ENCODE measurements at regions of chr12 and their contacts with region 1.

Region 1: GRCh38 chr12:20369305-20370005 is 1.1 kb downstream of the PDE3A start:
- DNase-seq: peak; percentile 48 to 55
- H3K4me3 ChIP-seq: peak overlapping the region; percentile 39
- H3K4me3 Mint-ChIP-seq: peak overlapping the region; percentile 84
- H3K27ac Mint-ChIP-seq: no peak overlapping the region
- H3K4me1 ChIP-seq: peaks cover 9% of the 10 kb centered on the region; the same call in 1 of the 2 replicates
- H3K4me1 Mint-ChIP-seq: peaks cover 13% of the 10 kb centered on the region
- H3K27me3 ChIP-seq: peaks cover 4% of the 10 kb centered on the region
- H3K27me3 Mint-ChIP-seq: peaks cover 43% of the 10 kb centered on the region
- CTCF ChIP-seq: peak in 1 of 2 experiments; percentile 1

Region 2: DNA sequence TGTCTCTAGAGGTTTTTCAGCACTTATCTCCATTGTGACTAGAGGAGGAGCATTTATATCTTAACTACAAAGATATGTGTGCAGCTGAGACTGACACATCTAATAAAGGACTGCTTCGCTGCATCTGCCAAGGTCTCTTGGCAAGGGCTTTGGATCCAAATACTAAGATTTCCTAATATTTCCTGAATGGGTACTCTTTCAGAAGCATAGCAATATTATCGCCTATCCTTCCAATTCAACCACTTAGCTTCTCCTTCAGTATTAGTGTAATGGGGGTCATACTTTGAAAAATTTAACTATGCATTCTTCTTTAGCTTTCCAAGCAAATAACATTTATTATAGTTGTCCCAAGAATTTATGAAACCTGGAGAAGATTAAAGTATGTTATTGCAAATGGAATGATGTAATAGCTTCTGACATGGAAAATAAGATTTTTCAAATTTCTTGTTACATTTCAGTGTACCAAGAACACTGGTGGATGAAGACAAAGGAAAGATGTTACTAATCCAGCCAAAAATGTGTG is 244.1 kb before region 1 on chr12:
- CTCF ChIA-PET with region 1: no interaction called
- POLR2A ChIA-PET with region 1: no interaction called
- intact Hi-C with region 1: loop called (anchors 10 kb)
- DNase-seq: no peak
- H3K4me3 ChIP-seq: no peak overlapping the region
- H3K4me3 Mint-ChIP-seq: no peak overlapping the region
- H3K27ac Mint-ChIP-seq: no peak overlapping the region
- H3K4me1 ChIP-seq: no peaks in the 10 kb centered on the region
- H3K4me1 Mint-ChIP-seq: no peaks in the 10 kb centered on the region
- H3K27me3 ChIP-seq: no peaks in the 10 kb centered on the region
- H3K27me3 Mint-ChIP-seq: peaks cover 3% of the 10 kb centered on the region
- CTCF ChIP-seq: no peak